Psoas muscle (tissue), 8 donors: ENCODE measurements at regions of chr10 and their contacts with region 1.

Region 1: DNA sequence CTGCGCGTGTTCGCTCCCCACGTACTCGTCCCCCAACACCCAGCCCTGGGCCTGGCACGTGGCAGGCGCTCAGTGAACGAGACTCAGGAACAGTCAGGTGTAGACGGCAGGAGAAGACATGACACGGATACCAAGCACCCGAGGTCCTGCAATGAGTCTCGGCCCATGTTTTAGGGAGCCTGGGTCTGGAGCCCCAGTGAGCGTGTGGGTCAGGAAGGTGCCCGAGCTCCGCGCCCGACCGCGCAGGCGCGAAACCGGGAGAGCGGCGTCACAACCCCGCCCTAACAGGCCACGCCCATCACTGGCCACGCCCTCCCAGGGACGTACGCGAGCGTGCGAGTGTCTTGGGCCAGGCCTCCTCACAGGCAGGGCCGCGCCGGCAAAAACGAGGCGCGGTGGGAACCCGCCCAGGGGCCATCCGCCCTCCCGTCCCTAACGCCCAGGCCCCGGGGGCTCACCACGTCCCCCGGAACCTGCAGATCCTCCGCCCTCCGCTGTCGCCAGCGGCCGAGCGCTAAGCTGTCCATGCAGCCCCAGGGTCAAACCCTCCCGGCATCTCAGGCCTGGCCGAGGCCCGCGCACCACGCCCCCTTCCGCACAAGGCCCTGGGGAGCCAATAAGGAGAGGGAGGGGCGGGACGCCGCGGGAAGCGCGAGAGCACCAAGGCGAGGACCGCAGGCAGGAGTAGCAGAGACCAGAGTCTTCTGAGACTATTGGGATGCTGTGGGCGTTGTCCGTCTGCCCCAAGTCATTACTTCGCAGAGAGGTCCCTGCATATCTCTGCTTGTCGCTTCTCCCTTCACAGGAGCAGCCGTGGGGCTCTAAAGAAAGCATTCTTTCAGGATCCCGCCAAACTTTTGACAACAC is at the start of gene C10orf143:
- DNase-seq: peak; percentile 98 to 99
- ATAC-seq: peak; percentile 94 to 96 (median 96)
- H3K4me3 ChIP-seq: peak within 1 kb of the TSS; percentile 74
- H3K27ac ChIP-seq: peak within 1 kb of the TSS; percentile 91
- H3K4me1 ChIP-seq: peaks cover 24% of the 10 kb centered on the region
- H3K27me3 ChIP-seq: no peaks in the 10 kb centered on the region
- CTCF ChIP-seq: no peak
- total RNA-seq, gene C10orf143: 4.1 to 5.1 (median 4.9) TPM

Region 2: GRCh38 chr10:130099344-130099743 is 11.1 kb before region 1 on chr10:
- intact Hi-C with region 1: no loop called
- DNase-seq: no peak
- ATAC-seq: no peak
- H3K4me3 ChIP-seq: no peak overlapping the region
- H3K27ac ChIP-seq: no peak overlapping the region
- H3K4me1 ChIP-seq: no peaks in the 10 kb centered on the region
- H3K27me3 ChIP-seq: no peaks in the 10 kb centered on the region
- CTCF ChIP-seq: no peak

Region 3: GRCh38 chr10:130136226-130137089 is 26.0 kb after region 1 on chr10 and contains the start of gene GLRX3:
- intact Hi-C with region 1: loop called (anchors 1 to 2 kb)
- DNase-seq: peak; percentile 92 to 93
- ATAC-seq: peak; percentile 96 to 97 (median 96)
- H3K4me3 ChIP-seq: peak within 1 kb of the TSS; percentile 100
- H3K27ac ChIP-seq: peak within 1 kb of the TSS; percentile 91
- H3K4me1 ChIP-seq: peaks cover 35% of the 10 kb centered on the region
- H3K27me3 ChIP-seq: peaks cover 0 to 7% (median 0%) of the 10 kb centered on the region in 3 donors
- CTCF ChIP-seq: no peak
- total RNA-seq, gene GLRX3: 53.9 to 76.9 (median 56.3) TPM